ENCODE measurements at regions of chr6 and their contacts with region 1.

Region 1: GRCh38 chr6:109073344-109074132 is 21.1 kb downstream of the SESN1 start:
- DNase-seq: peak in 30 of 35 experiments; percentile 13 to 89 (median 44)
- ATAC-seq: peak; percentile 52 to 72 (median 70)
- H3K4me3 ChIP-seq: no peak overlapping the region
- H3K4me3 Mint-ChIP-seq: peak overlapping the region in 1 of 3 donors; percentile 7
- H3K27ac ChIP-seq: no peak overlapping the region
- H3K27ac Mint-ChIP-seq: no peak overlapping the region
- H3K4me1 ChIP-seq: peaks cover 9 to 18% of the 10 kb centered on the region in 2 experiments
- H3K4me1 Mint-ChIP-seq: peaks cover 32 to 39% (median 37%) of the 10 kb centered on the region in 3 donors
- H3K27me3 ChIP-seq: no peaks in the 10 kb centered on the region
- H3K27me3 Mint-ChIP-seq: no peaks in the 10 kb centered on the region

Region 2: GRCh38 chr6:108558372-108559096 is 515.0 kb before region 1 on chr6:
- CTCF ChIA-PET with region 1: interaction called, 10 to 11 read pairs
- POLR2A ChIA-PET with region 1: interaction called in 1 of 2 experiments, 4 read pairs
- DNase-seq: peak; percentile 91 to 100 (median 97)
- ATAC-seq: peak; percentile 70 to 76 (median 72)
- H3K4me3 ChIP-seq: peak overlapping the region; percentile 88 to 97
- H3K4me3 Mint-ChIP-seq: peak overlapping the region; percentile 87 to 96 (median 95)
- H3K27ac ChIP-seq: peak overlapping the region; percentile 99
- H3K27ac Mint-ChIP-seq: peak overlapping the region; percentile 94 to 97
- H3K4me1 ChIP-seq: peaks cover 6 to 21% of the 10 kb centered on the region in 2 experiments
- H3K4me1 Mint-ChIP-seq: peaks cover 19 to 29% (median 24%) of the 10 kb centered on the region in 3 donors
- H3K27me3 ChIP-seq: peaks cover 0 to 5% of the 10 kb centered on the region in 2 experiments
- H3K27me3 Mint-ChIP-seq: no peaks in the 10 kb centered on the region

Region 3: DNA sequence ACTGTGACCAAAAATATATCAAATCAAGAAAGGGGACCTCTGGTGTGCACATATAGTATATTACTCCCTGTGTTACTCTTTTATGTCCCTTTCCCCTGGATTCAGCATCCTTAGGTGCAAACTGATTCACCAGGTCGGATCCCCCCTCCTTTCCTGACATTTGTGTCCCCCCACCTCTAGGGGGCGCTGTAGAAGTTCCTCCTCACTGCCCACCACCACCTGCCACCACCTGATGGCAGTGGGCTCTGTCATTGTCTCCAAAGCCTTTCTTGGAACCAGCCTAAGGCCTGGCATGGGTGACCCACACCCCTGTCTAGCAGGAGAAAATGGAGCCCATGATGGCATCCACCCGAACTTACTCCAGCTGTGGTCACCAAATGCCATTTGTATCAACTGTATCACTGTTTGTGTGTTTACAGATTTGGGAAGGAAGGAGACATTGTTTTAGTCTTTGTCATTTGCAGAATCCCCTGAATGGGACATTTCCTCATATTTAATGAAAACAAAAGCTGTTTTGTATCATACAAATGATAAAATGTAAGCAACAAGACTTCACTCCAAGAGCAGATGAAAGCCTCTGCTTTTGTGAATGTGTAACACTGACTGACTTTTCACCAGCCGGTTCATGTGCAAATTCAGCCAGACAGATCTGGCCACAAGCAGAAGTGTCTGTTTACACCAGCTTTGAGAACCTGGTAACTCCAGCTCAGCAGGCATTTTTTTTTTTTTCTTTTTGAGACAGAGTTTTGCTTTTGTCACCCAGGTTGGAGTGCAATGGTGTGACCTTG is 159.1 kb before region 1 on chr6:
- CTCF ChIA-PET with region 1: interaction called in 1 of 2 experiments, 13 read pairs
- POLR2A ChIA-PET with region 1: no interaction called
- DNase-seq: peak in 30 of 35 experiments; percentile 2 to 67 (median 28)
- ATAC-seq: peak in 1 of 4 experiments; percentile 40
- H3K4me3 ChIP-seq: no peak overlapping the region
- H3K4me3 Mint-ChIP-seq: no peak overlapping the region
- H3K27ac ChIP-seq: no peak overlapping the region
- H3K27ac Mint-ChIP-seq: no peak overlapping the region
- H3K4me1 ChIP-seq: peaks cover 0 to 3% of the 10 kb centered on the region in 2 experiments
- H3K4me1 Mint-ChIP-seq: peaks cover 0 to 11% (median 4%) of the 10 kb centered on the region in 3 donors
- H3K27me3 ChIP-seq: no peaks in the 10 kb centered on the region
- H3K27me3 Mint-ChIP-seq: no peaks in the 10 kb centered on the region

Region 4: DNA sequence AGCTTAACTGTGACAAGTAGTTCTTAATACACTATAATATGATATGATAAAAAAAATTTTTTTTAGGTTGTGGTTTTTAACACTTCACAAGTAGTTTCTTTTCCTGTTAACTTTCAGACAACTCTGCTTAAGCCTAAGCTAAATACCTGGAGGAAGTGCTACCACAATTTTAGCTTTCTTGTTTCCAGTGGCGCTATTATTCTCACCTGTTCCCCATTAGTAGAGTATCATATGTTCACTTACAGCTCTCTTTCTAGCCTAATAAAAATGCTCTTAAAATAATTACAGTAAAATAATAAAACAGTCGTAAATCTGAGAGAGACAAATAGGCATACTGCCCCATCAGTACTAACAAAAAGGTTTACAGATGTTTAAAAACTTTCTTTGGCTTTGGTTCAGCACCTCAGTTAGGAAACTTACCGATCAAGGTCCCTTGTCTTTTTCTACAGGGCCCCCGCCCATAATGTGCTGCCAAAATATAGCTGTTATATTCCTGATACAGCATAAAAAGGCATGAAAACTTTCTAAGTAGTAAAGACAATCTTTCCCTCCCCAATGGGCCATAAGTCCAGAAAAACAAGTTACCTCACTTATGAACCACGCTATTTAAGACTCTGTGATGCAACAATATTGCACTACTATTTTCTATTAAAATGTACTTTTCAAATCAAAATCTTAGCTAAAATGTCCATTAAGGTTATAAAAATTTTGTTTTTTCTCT is 36.8 kb before region 1 on chr6:
- CTCF ChIA-PET with region 1: interaction called, 3 to 14 read pairs
- POLR2A ChIA-PET with region 1: no interaction called
- DNase-seq: peak in 1 of 35 experiments; percentile 47
- ATAC-seq: peak; percentile 57 to 91 (median 86)
- H3K4me3 ChIP-seq: no peak overlapping the region
- H3K4me3 Mint-ChIP-seq: peak overlapping the region in 1 of 3 donors; percentile 13
- H3K27ac ChIP-seq: peak overlapping the region; percentile 82
- H3K27ac Mint-ChIP-seq: peak overlapping the region; percentile 82 to 83
- H3K4me1 ChIP-seq: peaks cover 9 to 15% of the 10 kb centered on the region in 2 experiments
- H3K4me1 Mint-ChIP-seq: peaks cover 37 to 67% (median 52%) of the 10 kb centered on the region in 3 donors
- H3K27me3 ChIP-seq: no peaks in the 10 kb centered on the region
- H3K27me3 Mint-ChIP-seq: no peaks in the 10 kb centered on the region

Region 5: GRCh38 chr6:109095027-109095834 is 21.7 kb after region 1 on chr6 and contains the start of gene CEP57L1:
- CTCF ChIA-PET with region 1: interaction called, 3 to 13 read pairs
- POLR2A ChIA-PET with region 1: interaction called in 1 of 2 experiments, 5 read pairs
- DNase-seq: peak; percentile 84 to 97 (median 94)
- ATAC-seq: peak; percentile 76 to 83 (median 80)
- H3K4me3 ChIP-seq: peak within 1 kb of the TSS; percentile 83 to 93
- H3K4me3 Mint-ChIP-seq: peak within 1 kb of the TSS; percentile 89 to 93 (median 90)
- H3K27ac ChIP-seq: peak within 1 kb of the TSS; percentile 98
- H3K27ac Mint-ChIP-seq: peak within 1 kb of the TSS; percentile 99
- H3K4me1 ChIP-seq: peaks cover 8 to 28% of the 10 kb centered on the region in 2 experiments
- H3K4me1 Mint-ChIP-seq: peaks cover 49 to 59% (median 55%) of the 10 kb centered on the region in 3 donors
- H3K27me3 ChIP-seq: no peaks in the 10 kb centered on the region
- H3K27me3 Mint-ChIP-seq: no peaks in the 10 kb centered on the region
- total RNA-seq, gene CEP57L1: 5.2 to 7.9 (median 5.9) TPM

Region 6: GRCh38 chr6:109121411-109121810 is 47.9 kb after region 1 on chr6:
- CTCF ChIA-PET with region 1: no interaction called
- POLR2A ChIA-PET with region 1: no interaction called
- DNase-seq: no peak
- ATAC-seq: no peak
- H3K4me3 ChIP-seq: no peak overlapping the region
- H3K4me3 Mint-ChIP-seq: no peak overlapping the region
- H3K27ac ChIP-seq: no peak overlapping the region
- H3K27ac Mint-ChIP-seq: no peak overlapping the region
- H3K4me1 ChIP-seq: no peaks in the 10 kb centered on the region
- H3K4me1 Mint-ChIP-seq: peaks cover 13 to 26% (median 17%) of the 10 kb centered on the region in 3 donors
- H3K27me3 ChIP-seq: no peaks in the 10 kb centered on the region
- H3K27me3 Mint-ChIP-seq: no peaks in the 10 kb centered on the region